Panc1 (cell line): ENCODE measurements at regions of chr7 and their contacts with region 1.

Region 1: GRCh38 chr7:116499168-116500077 is at the start of gene CAV2:
- DNase-seq: no peak
- ATAC-seq: peak; percentile 89
- H3K4me3 ChIP-seq: peak within 1 kb of the TSS; percentile 89 to 98
- H3K27ac ChIP-seq: peak within 1 kb of the TSS; percentile 100
- H3K4me1 ChIP-seq: peaks cover 44% of the 10 kb centered on the region
- H3K27me3 ChIP-seq: no peaks in the 10 kb centered on the region
- CTCF ChIP-seq: no peak
- total RNA-seq, gene CAV2: 217 TPM

Region 2: GRCh38 chr7:116354546-116355408 is 144.6 kb before region 1 on chr7:
- CTCF ChIA-PET with region 1: no interaction called
- POLR2A ChIA-PET with region 1: interaction called, 10 read pairs
- in situ Hi-C with region 1: no loop called
- intact Hi-C with region 1: loop called (anchors 2 kb)
- DNase-seq: peak; percentile 98
- ATAC-seq: peak; percentile 92
- H3K4me3 ChIP-seq: peak overlapping the region; percentile 12 to 49
- H3K27ac ChIP-seq: peak overlapping the region; percentile 100
- H3K4me1 ChIP-seq: peaks cover 49% of the 10 kb centered on the region
- H3K27me3 ChIP-seq: no peaks in the 10 kb centered on the region
- CTCF ChIP-seq: no peak

Region 3: GRCh38 chr7:116393654-116394053 is 105.8 kb before region 1 on chr7:
- CTCF ChIA-PET with region 1: no interaction called
- POLR2A ChIA-PET with region 1: interaction called, 14 read pairs
- in situ Hi-C with region 1: no loop called
- intact Hi-C with region 1: no loop called
- DNase-seq: no peak
- ATAC-seq: peak; percentile 40; the same call in 1 of the 2 replicates
- H3K4me3 ChIP-seq: no peak overlapping the region
- H3K27ac ChIP-seq: peak overlapping the region; percentile 93
- H3K4me1 ChIP-seq: peaks cover 40% of the 10 kb centered on the region
- H3K27me3 ChIP-seq: no peaks in the 10 kb centered on the region
- CTCF ChIP-seq: no peak

Region 4: DNA sequence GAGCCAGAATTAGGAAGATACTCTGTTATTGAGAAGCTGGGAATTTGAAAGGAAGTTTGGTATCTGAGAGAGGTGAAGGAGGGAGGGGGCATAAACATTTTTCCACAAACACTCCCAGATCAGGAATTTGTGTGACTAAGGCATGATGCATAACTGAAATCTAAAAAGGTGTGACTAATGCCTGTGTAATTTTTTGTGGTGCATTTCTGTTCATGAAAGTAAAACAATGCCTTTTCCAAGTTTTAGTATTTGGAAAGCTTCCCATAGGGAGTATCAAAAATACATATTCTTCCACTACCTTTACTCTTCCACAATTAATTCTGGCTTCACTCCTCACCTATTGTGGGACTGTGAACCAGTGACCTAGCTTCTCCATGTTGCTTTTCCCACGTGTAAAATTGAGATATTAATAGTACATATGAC is 56.3 kb before region 1 on chr7:
- CTCF ChIA-PET with region 1: no interaction called
- POLR2A ChIA-PET with region 1: no interaction called
- in situ Hi-C with region 1: no loop called
- intact Hi-C with region 1: loop called (anchors 10 kb)
- DNase-seq: peak; percentile 95
- ATAC-seq: peak; percentile 94
- H3K4me3 ChIP-seq: no peak overlapping the region
- H3K27ac ChIP-seq: peak overlapping the region; percentile 96
- H3K4me1 ChIP-seq: peaks cover 23% of the 10 kb centered on the region
- H3K27me3 ChIP-seq: no peaks in the 10 kb centered on the region
- CTCF ChIP-seq: no peak